ENCODE measurements at regions of chr17 and their contacts with region 1.

Region 1: DNA sequence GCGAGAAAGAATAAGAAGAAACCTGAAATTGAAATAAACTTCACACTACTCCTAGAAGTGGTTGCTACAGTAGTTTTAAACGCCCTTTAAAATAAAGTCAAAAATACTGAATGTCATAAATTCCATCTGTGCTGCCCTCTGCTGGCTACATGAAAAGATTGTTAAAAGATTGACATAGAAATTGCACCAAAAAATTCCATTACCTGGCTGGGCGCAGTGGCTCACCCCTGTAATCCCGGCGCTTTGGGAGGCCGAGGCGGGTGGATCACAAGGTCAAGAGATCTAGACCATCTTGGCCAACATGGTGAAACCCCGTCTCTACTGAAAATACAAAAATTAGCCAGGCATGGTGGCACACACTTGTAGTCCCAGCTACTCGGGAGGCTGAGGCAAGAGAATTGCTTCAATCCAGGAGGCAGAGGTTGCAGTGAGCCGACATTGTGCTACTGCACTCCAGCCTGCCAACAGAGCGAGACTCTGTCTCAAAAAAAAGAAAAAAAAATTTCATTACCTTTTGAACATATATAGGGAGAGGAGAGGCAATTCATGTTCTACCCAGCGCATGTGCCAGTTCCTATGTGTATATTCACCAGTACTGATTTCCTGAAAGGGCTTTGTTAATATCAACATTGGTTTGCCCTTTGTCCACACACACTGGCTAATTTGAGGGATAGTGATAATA is 36.5 kb downstream of the CYTH1 start:
- DNase-seq: no peak
- ATAC-seq: no peak
- H3K4me3 ChIP-seq: no peak overlapping the region
- H3K27ac ChIP-seq: peak overlapping the region in 2 of 12 donors; percentile 0 to 81
- H3K4me1 ChIP-seq: peaks cover 0 to 97% (median 51%) of the 10 kb centered on the region in 12 donors
- H3K27me3 ChIP-seq: no peaks in the 10 kb centered on the region
- CTCF ChIP-seq: peak; percentile 51 to 68 (median 62)
- POLR2A ChIP-seq: no peak

Region 2: DNA sequence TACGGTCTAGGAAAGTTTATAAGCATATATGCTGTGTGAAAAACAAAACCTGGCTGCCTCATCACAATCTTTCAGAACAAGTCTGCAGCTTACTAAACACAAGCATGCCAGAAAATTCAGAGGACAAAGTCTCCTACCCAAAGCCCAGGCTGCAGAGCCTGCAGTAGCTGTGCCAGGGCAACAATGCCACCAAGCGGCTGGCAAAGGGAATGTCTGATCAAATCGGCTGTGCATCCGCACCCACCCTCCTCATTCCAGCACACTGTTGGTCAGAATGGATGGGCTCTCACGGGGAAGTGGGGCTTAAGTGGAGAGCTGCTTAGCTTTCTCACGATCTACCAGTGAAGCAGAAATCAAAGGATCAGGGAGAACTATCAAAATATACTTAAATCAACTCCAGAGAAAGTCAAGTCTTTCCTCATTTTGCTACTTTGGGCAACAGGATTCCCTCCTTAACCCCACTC is 37.0 kb before region 1 on chr17:
- intact Hi-C with region 1: loop called in 2 of 10 experiments (anchors 5 kb)
- DNase-seq: peak; percentile 68 to 81 (median 74)
- ATAC-seq: peak; percentile 58 to 92 (median 85)
- H3K4me3 ChIP-seq: no peak overlapping the region
- H3K27ac ChIP-seq: peak overlapping the region in 1 of 12 donors; percentile 50
- H3K4me1 ChIP-seq: peaks cover 0 to 48% (median 27%) of the 10 kb centered on the region in 12 donors
- H3K27me3 ChIP-seq: no peaks in the 10 kb centered on the region
- CTCF ChIP-seq: peak; percentile 68 to 94 (median 82)
- POLR2A ChIP-seq: no peak

Region 3: GRCh38 chr17:78781948-78782916 is 36.7 kb after region 1 on chr17 and contains the start of gene CYTH1:
- intact Hi-C with region 1: loop called in 3 of 10 experiments (anchors 5 kb)
- DNase-seq: peak; percentile 97 to 99 (median 97)
- ATAC-seq: peak; percentile 94 to 96 (median 95)
- H3K4me3 ChIP-seq: peak within 1 kb of the TSS; percentile 85 to 100 (median 94)
- H3K27ac ChIP-seq: peak within 1 kb of the TSS; percentile 88 to 99 (median 96)
- H3K4me1 ChIP-seq: peaks cover 0 to 58% (median 20%) of the 10 kb centered on the region in 12 donors
- H3K27me3 ChIP-seq: no peaks in the 10 kb centered on the region
- CTCF ChIP-seq: no peak
- POLR2A ChIP-seq: peak; percentile 30 to 54
- total RNA-seq, gene CYTH1: 27.2 to 59.1 (median 31.2) TPM

Region 4: GRCh38 chr17:78798695-78799559 is 53.4 kb after region 1 on chr17:
- intact Hi-C with region 1: loop called in 1 of 10 experiments (anchors 5 kb)
- DNase-seq: no peak
- ATAC-seq: peak in 2 of 4 donors; percentile 20 to 31
- H3K4me3 ChIP-seq: no peak overlapping the region
- H3K27ac ChIP-seq: no peak overlapping the region
- H3K4me1 ChIP-seq: peaks cover 0 to 37% (median 11%) of the 10 kb centered on the region in 12 donors
- H3K27me3 ChIP-seq: no peaks in the 10 kb centered on the region
- CTCF ChIP-seq: peak; percentile 22 to 63 (median 47)
- POLR2A ChIP-seq: no peak

Measured in heart left ventricle (tissue), 16 donors.